OCI-LY7 (cell line): ENCODE measurements at regions of chr6 and their contacts with region 1.

Region 1: DNA sequence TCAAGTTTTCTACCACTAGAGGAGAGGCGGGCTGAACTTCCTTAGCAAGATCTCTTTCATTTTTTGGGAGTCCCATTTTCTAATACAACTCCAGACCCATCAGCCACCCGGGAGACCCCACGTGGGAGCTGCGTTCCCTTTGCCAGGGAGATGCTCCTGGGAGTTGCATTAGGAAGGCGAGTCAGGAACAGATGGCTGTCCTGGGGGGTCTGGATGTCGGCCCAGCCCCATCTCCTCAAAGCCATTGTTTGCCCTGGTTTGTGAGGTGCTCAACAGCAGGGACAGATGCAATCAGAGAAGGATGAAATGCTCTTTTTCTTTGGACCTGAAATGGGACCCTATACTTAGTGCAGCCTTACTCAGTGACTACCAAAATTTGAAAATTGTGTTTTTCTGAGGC is 39.4 kb downstream of the CARMIL1 start:
- DNase-seq: no peak
- H3K4me3 ChIP-seq: no peak overlapping the region
- H3K27ac ChIP-seq: no peak overlapping the region
- H3K4me1 ChIP-seq: peaks cover 25% of the 10 kb centered on the region
- CTCF ChIP-seq: no peak

Region 2: GRCh38 chr6:25334793-25335413 is 16.3 kb after region 1 on chr6:
- CTCF ChIA-PET with region 1: no interaction called
- POLR2A ChIA-PET with region 1: interaction called, 9 read pairs
- intact Hi-C with region 1: loop called (anchors 2 kb)
- DNase-seq: peak; percentile 49
- H3K4me3 ChIP-seq: peak overlapping the region; percentile 32
- H3K27ac ChIP-seq: no peak overlapping the region
- H3K4me1 ChIP-seq: peaks cover 34% of the 10 kb centered on the region
- CTCF ChIP-seq: no peak